ENCODE measurements at regions of chr13 and their contacts with region 1.

Region 1: DNA sequence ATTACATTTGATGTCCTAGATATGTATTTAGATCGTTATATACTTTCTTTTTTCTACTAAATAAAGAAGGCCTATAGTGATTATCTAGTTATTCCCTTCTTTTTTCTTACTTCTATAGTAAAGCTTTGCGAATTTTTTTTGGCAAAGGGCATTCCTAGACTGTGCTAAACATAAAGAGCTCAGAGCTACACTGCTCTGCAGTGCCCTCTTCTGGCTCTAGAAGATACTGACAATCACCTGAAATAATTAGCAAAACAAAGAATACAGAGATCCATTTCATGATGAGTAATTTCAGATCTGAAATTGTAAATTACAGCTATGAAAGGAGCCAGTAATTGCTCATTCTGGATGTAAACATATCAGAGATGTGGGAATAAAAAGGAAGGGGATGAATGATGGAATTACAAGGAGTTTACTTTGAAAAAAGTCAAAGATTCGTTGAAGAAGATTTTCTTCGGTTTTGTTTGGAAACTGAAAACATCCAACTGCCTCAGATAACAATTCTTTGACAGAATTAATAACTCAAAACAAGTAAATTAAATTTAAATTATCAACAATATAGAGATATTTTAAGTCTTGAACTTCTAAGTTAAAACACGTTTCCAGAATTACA is 288.5 kb downstream of the NALCN start:
- DNase-seq: peak; percentile 33
- ATAC-seq: peak; percentile 81
- H3K4me3 ChIP-seq: no peak overlapping the region
- H3K27ac ChIP-seq: no peak overlapping the region
- H3K4me1 ChIP-seq: no peaks in the 10 kb centered on the region
- H3K27me3 ChIP-seq: no peaks in the 10 kb centered on the region
- CTCF ChIP-seq: peak; percentile 69
- EP300 ChIP-seq: no peak
- POLR2A ChIP-seq: no peak
- RAD21 ChIP-seq: no peak

Region 2: DNA sequence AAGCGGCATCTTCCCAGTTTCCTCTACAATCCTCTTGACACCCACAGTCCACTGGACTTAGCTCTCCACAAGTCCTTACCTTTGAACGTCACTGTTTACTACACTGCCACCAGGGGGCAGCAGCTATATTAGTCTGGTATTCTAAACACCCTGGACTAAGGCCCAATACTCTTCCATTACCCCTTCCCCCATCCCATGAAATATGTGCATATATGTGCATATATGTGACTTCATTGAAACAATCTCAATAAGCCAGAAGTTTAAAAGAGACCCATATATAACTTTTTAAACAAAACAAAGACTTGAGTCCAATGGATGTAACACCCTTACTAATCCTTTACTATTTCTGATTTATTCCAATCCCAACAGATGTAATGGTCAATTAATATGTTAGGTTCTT is 554.7 kb before region 1 on chr13:
- CTCF ChIA-PET with region 1: no interaction called
- POLR2A ChIA-PET with region 1: no interaction called
- in situ Hi-C with region 1: loop called (anchors 25 kb)
- intact Hi-C with region 1: loop called (anchors 1 kb)
- DNase-seq: peak; percentile 77
- ATAC-seq: peak; percentile 96
- H3K4me3 ChIP-seq: no peak overlapping the region
- H3K27ac ChIP-seq: no peak overlapping the region
- H3K4me1 ChIP-seq: peaks cover 28% of the 10 kb centered on the region
- H3K27me3 ChIP-seq: no peaks in the 10 kb centered on the region
- CTCF ChIP-seq: peak; percentile 82
- EP300 ChIP-seq: no peak
- POLR2A ChIP-seq: no peak
- RAD21 ChIP-seq: 0 out of 2 replicates have a peak, but pooled peaks have one; percentile 22

Region 3: DNA sequence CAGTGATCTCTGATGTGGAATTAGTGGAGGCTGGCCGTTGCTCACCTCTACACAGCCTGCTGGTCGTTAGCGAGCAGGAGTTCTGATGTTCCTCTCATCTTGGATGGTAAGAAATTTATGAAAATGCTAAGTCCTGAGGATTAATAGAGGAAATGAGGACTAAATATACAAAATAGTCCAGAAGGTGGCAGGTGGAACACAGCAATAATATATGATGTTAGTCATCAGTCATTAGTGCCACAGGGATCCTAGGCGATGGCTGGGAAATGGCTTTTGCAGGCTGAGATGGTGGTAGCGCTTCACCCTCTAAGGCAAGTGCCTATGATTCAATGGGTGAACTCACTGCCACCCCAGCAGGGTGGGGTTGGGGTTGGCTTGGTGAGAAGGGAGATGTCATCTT is 114.6 kb before region 1 on chr13:
- CTCF ChIA-PET with region 1: no interaction called
- POLR2A ChIA-PET with region 1: no interaction called
- in situ Hi-C with region 1: no loop called
- intact Hi-C with region 1: no loop called
- DNase-seq: no peak
- ATAC-seq: no peak
- H3K4me3 ChIP-seq: no peak overlapping the region
- H3K27ac ChIP-seq: no peak overlapping the region
- H3K4me1 ChIP-seq: no peaks in the 10 kb centered on the region
- H3K27me3 ChIP-seq: peaks cover 0 to 15% of the 10 kb centered on the region in 2 experiments; a peak in 2 of 5 replicates
- CTCF ChIP-seq: no peak
- EP300 ChIP-seq: no peak
- POLR2A ChIP-seq: no peak
- RAD21 ChIP-seq: no peak

Region 4: GRCh38 chr13:101065329-101065728 is 62.5 kb before region 1 on chr13:
- CTCF ChIA-PET with region 1: no interaction called
- POLR2A ChIA-PET with region 1: no interaction called
- in situ Hi-C with region 1: no loop called
- intact Hi-C with region 1: no loop called
- DNase-seq: no peak
- ATAC-seq: no peak
- H3K4me3 ChIP-seq: no peak overlapping the region
- H3K27ac ChIP-seq: no peak overlapping the region
- H3K4me1 ChIP-seq: no peaks in the 10 kb centered on the region
- H3K27me3 ChIP-seq: peaks cover 0 to 6% of the 10 kb centered on the region in 2 experiments; a peak in 1 of 5 replicates
- CTCF ChIP-seq: no peak
- EP300 ChIP-seq: no peak
- POLR2A ChIP-seq: no peak
- RAD21 ChIP-seq: no peak

Region 5: GRCh38 chr13:101452519-101453485 is 325.0 kb after region 1 on chr13 and contains the start of gene ITGBL1:
- CTCF ChIA-PET with region 1: no interaction called
- POLR2A ChIA-PET with region 1: no interaction called
- in situ Hi-C with region 1: loop called (anchors 25 kb)
- intact Hi-C with region 1: no loop called
- DNase-seq: no peak
- ATAC-seq: peak; percentile 75
- H3K4me3 ChIP-seq: peak within 1 kb of the TSS; percentile 19 to 60 (median 50)
- H3K27ac ChIP-seq: no peak within 1 kb of the TSS
- H3K4me1 ChIP-seq: no peaks in the 10 kb centered on the region; the same call in 1 of the 2 replicates
- H3K27me3 ChIP-seq: peaks cover 0 to 7% of the 10 kb centered on the region in 2 experiments; a peak in 1 of 5 replicates
- CTCF ChIP-seq: no peak
- EP300 ChIP-seq: no peak
- POLR2A ChIP-seq: no peak
- RAD21 ChIP-seq: no peak
- total RNA-seq, gene ITGBL1: 0.02 TPM in 1 of 2 replicates, not detected in the other

Region 6: DNA sequence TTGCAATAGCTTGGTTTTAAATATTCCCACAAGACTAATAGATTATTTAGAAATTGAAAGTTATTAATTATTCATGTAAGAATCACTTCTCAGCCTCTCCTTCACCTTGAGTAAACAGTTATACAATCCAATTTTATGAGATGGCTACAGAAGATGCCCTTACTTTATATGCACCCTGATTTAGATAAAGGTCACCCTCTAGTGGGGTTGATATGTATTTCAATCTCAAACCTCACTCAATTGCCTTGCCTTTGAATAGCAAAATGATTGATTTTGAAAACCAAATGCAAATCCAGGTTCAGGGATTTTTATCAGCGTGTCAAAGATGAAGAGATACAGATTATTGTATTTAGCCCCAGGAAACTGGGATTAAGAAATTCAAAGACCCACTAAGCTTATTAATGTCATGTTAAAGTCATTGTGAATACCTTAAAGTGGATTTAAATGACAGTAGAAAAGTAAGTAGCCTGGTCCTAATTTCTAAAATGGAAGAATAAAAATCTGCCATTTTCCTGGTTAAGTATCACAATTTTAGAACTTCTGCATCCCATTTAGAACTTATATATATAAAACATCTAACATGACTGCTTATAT is 629.7 kb after region 1 on chr13:
- CTCF ChIA-PET with region 1: no interaction called
- POLR2A ChIA-PET with region 1: no interaction called
- in situ Hi-C with region 1: loop called (anchors 25 kb)
- intact Hi-C with region 1: no loop called
- DNase-seq: no peak
- ATAC-seq: peak; percentile 51; the same call in 2 of the 3 replicates
- H3K4me3 ChIP-seq: no peak overlapping the region
- H3K27ac ChIP-seq: no peak overlapping the region
- H3K4me1 ChIP-seq: no peaks in the 10 kb centered on the region
- H3K27me3 ChIP-seq: no peaks in the 10 kb centered on the region; a peak in 1 of 5 replicates
- CTCF ChIP-seq: peak; percentile 30
- EP300 ChIP-seq: no peak
- POLR2A ChIP-seq: no peak
- RAD21 ChIP-seq: peak; percentile 35; the same call in 1 of the 2 replicates